AG04450 (cell line): ENCODE measurements at regions of chr1 and their contacts with region 1.

Region 1: DNA sequence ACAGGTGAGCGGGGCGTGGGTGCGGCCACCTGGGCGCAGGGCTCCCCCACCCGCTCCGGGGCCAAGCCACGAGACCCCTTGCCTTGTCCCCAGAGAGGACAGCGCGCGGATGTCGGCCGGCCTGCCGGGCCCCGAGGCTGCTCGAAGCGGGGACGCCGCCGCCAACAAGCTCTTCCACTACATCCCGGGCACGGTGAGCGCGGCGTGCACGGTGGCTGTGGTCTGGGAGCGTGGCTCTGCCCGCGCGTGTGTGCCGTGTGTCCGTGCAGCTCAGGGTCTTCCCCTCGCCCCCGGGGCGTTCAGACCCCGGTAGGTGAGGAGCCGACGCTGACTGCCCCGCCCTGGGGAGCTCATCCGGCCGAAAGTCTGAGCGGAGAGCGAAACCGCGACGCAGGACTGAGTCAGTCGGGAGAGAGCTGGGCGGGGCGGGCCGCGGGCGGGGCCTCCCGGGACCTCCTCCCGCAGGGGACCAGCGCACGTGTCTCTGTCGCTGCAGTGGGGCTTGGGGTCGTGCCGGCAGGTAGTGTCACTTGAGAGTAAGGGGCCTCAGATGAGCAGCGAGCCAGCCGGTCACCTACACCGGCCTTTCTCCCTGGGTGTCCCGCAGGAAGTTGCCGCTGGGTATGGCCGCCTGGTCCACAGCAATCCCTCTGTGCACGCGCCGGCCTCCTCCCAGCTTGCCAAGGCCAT is 474 bp downstream of the PLEKHN1 start:
- DNase-seq: no peak
- H3K4me3 ChIP-seq: peak overlapping the region; percentile 74
- H3K27ac ChIP-seq: no peak overlapping the region
- H3K27me3 ChIP-seq: peaks cover 18% of the 10 kb centered on the region
- CTCF ChIP-seq: no peak

Region 2: GRCh38 chr1:940106-941014 is 26.4 kb before region 1 on chr1:
- CTCF ChIA-PET with region 1: no interaction called
- POLR2A ChIA-PET with region 1: interaction called, 12 read pairs
- DNase-seq: no peak
- H3K4me3 ChIP-seq: peak overlapping the region; percentile 32; the same call in 1 of the 2 replicates
- H3K27ac ChIP-seq: peak overlapping the region; percentile 11
- H3K27me3 ChIP-seq: peaks cover 4% of the 10 kb centered on the region
- CTCF ChIP-seq: no peak

Region 3: GRCh38 chr1:1150100-1150499 is 183.3 kb after region 1 on chr1:
- CTCF ChIA-PET with region 1: no interaction called
- POLR2A ChIA-PET with region 1: no interaction called
- DNase-seq: no peak
- H3K4me3 ChIP-seq: no peak overlapping the region
- H3K27ac ChIP-seq: no peak overlapping the region
- H3K27me3 ChIP-seq: peaks cover 7% of the 10 kb centered on the region
- CTCF ChIP-seq: no peak